Activated CD4-positive, alpha-beta T cell treated with anti-CD3 and anti-CD28 coated beads, Interleukin-2, amount 10 ng/mL, durations not matched to agents 7 days and 5 days (primary cell): ENCODE measurements at regions of chr12 and their contacts with region 1.

Region 1: GRCh38 chr12:91687052-91688017 is 458.3 kb downstream of the BTG1 start:
- DNase-seq: peak; percentile 68
- H3K4me3 Mint-ChIP-seq: peak overlapping the region; percentile 19
- H3K27ac Mint-ChIP-seq: peak overlapping the region; percentile 88
- H3K4me1 Mint-ChIP-seq: peaks cover 29% of the 10 kb centered on the region
- H3K27me3 Mint-ChIP-seq: no peaks in the 10 kb centered on the region

Region 2: GRCh38 chr12:91434081-91434480 is 253.3 kb before region 1 on chr12:
- CTCF ChIA-PET with region 1: no interaction called
- POLR2A ChIA-PET with region 1: interaction called, 10 read pairs
- DNase-seq: no peak
- H3K4me3 Mint-ChIP-seq: no peak overlapping the region
- H3K27ac Mint-ChIP-seq: no peak overlapping the region
- H3K4me1 Mint-ChIP-seq: peaks cover 3% of the 10 kb centered on the region
- H3K27me3 Mint-ChIP-seq: no peaks in the 10 kb centered on the region